ENCODE measurements at regions of chr9 and their contacts with region 1.

Region 1: DNA sequence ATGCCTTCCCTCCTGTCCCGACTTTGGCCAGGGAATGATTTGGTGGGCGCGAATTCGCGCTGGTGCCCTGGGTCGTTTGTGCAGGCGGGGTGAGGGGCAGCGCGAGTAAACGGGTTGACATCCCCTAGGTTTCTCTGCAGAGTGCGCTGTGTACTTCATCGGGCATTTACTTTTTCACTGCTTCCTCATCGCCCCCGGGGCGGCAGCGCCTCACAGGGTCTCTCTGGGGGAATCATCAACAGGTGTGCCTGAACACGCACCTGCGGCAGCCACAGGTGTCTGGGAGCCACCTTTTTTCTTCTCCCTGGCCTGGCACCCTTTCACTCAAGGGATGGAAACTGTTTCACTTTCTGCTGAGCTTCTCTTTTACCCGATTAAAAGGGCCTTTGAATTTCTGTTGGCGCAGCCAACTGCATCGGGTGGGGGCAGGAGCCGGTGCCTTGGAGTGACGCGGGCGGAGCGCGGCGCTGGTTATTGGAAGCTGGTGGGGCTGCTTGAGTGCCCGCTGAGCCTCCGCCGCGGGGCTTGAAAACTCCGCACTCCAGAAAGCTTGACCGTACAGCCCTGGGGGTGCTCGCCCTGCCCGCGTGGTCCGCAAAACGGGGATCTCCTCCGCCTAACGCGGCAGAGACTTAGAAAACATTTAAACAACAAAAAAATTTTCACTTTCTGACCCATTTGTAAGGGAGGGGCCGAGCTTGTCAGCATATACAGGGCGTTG is 52.1 kb upstream of the TJP2 start:
- DNase-seq: peak; percentile 20 to 48
- ATAC-seq: peak; percentile 80 to 81
- H3K4me3 ChIP-seq: peak overlapping the region; percentile 55
- H3K27ac ChIP-seq: peak overlapping the region; percentile 37 to 78
- H3K4me1 ChIP-seq: peaks cover 6% of the 10 kb centered on the region; the same call in 1 of the 3 replicates
- CTCF ChIP-seq: no peak
- EP300 ChIP-seq: no peak
- POLR2A ChIP-seq: no peak
- RAD21 ChIP-seq: no peak

Region 2: DNA sequence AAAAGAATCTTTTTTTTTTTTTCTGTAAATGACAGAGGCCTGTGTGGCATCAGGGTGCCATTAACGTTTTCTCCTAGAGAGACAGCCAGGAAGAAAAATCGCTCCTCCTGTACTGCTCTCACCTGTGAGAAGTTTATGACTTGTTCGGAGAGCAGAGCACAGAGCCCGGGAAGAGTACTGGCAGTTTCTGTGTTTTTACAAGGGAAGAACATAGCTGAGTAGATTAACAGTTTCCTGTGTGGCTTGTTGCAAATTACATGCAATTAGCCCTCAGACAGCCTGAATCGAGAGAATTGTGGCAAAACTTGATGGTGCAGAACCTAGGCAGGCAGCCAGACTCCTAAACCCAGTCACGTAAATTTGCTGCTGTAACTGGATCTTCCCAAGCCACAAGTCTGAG is 140.2 kb before region 1 on chr9:
- CTCF ChIA-PET with region 1: no interaction called
- POLR2A ChIA-PET with region 1: no interaction called
- DNase-seq: no peak
- ATAC-seq: no peak
- H3K4me3 ChIP-seq: no peak overlapping the region
- H3K27ac ChIP-seq: no peak overlapping the region
- H3K4me1 ChIP-seq: no peaks in the 10 kb centered on the region
- CTCF ChIP-seq: no peak
- EP300 ChIP-seq: no peak
- POLR2A ChIP-seq: no peak
- RAD21 ChIP-seq: no peak

Region 3: GRCh38 chr9:69157751-69158466 is 35.9 kb after region 1 on chr9:
- CTCF ChIA-PET with region 1: interaction called, 10 read pairs
- POLR2A ChIA-PET with region 1: no interaction called
- DNase-seq: no peak
- ATAC-seq: peak in 1 of 2 experiments; percentile 33; a peak in 2 of 6 replicates
- H3K4me3 ChIP-seq: no peak overlapping the region
- H3K27ac ChIP-seq: no peak overlapping the region
- H3K4me1 ChIP-seq: no peaks in the 10 kb centered on the region
- CTCF ChIP-seq: peak; percentile 32; the same call in 2 of the 3 replicates
- EP300 ChIP-seq: no peak
- POLR2A ChIP-seq: no peak
- RAD21 ChIP-seq: 0 out of 5 replicates have a peak, but pooled peaks of 1 of the 2 experiments have one; percentile 16